ENCODE measurements at regions of chr12 and their contacts with region 1.

Region 1: DNA sequence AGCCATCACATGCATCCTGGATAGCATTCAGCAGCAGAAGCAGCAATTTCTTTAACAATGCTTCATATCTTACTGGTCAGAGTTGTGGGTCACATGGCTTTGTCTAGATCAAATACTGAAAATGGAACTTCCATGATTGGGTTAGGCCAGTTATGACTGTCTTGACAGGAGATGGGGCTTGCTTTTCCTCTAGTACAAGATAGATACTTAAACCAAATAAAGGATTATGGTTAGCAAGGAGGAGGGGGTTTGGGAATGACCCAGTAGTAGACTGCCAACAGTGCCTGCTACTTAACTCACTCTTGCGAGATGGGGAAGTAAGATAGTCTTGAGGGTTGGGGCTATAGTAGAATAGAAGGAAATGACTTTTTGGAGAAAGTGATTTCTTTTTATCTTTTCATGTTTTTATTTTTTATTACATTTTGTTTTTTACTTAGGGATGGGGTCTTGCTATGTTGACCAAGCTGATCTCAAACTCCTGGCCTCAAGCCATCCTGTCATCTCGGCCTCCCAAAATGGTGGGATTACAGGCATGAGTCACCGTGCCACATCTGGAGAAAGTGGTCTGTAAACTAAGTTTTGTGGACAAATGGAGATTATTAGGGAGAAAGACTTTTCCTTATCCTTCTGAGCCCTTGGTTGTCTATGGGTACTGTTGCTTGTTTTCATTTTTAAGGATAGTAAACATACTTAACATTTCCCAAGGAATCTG is 37.6 kb downstream of the WNK1 start:
- DNase-seq: no peak
- H3K4me3 ChIP-seq: no peak overlapping the region
- H3K4me3 Mint-ChIP-seq: peak overlapping the region; percentile 15 to 74 (median 57)
- H3K27ac ChIP-seq: no peak overlapping the region
- H3K27ac Mint-ChIP-seq: peak overlapping the region; percentile 60 to 81 (median 66)
- H3K4me1 ChIP-seq: peaks cover 95% of the 10 kb centered on the region
- H3K4me1 Mint-ChIP-seq: peaks cover 52 to 90% (median 75%) of the 10 kb centered on the region in 4 donors
- H3K27me3 ChIP-seq: no peaks in the 10 kb centered on the region
- H3K27me3 Mint-ChIP-seq: no peaks in the 10 kb centered on the region

Region 2: GRCh38 chr12:802242-803120 is 12.5 kb after region 1 on chr12:
- CTCF ChIA-PET with region 1: interaction called, 4 read pairs
- POLR2A ChIA-PET with region 1: interaction called, 4 read pairs
- intact Hi-C with region 1: loop called (anchors 2 kb)
- DNase-seq: no peak
- H3K4me3 ChIP-seq: no peak overlapping the region
- H3K4me3 Mint-ChIP-seq: peak overlapping the region in 6 of 8 donors; percentile 11 to 66 (median 46)
- H3K27ac ChIP-seq: no peak overlapping the region
- H3K27ac Mint-ChIP-seq: peak overlapping the region; percentile 57 to 86 (median 77)
- H3K4me1 ChIP-seq: peaks cover 76% of the 10 kb centered on the region
- H3K4me1 Mint-ChIP-seq: peaks cover 51 to 79% (median 65%) of the 10 kb centered on the region in 4 donors
- H3K27me3 ChIP-seq: no peaks in the 10 kb centered on the region
- H3K27me3 Mint-ChIP-seq: no peaks in the 10 kb centered on the region

Region 3: DNA sequence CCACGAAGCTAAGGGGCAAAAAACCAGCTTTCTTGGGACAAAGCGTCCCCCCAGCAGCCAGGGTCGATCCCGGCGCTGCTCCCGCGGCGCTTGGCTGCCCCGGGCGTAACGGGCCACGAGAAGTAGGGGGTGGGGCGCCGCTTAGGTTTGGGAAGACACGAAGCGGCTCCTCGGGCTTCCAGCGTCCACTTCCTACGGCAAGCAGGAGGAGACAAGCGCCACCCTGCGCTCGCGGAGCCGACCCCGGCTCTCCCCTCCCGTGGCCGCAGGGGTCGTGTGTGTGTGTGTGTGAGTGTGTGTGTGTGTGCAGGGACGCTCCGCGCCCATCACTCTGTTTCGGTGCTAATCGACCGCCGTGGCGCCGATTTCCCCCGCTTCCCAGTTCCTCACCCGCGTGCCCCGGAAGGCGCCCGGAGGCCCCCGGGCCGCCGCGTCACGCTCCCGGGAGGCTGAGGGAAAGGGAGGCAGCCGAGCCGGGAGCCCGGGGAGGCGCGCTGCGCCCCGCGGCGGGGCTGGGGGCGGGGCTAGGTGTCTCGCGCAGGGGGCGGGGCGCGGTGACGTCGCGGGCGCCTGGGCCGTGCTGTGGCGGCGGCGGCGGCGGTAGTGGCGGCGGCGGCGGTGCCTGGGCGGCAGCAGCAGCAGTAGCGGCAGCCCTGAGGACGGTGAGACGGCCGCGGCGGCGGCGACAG is 200.8 kb after region 1 on chr12 and contains the start of gene ERC1:
- CTCF ChIA-PET with region 1: no interaction called
- POLR2A ChIA-PET with region 1: no interaction called
- intact Hi-C with region 1: no loop called
- DNase-seq: peak; percentile 78 to 90 (median 85)
- H3K4me3 ChIP-seq: peak within 1 kb of the TSS; percentile 69 to 78
- H3K4me3 Mint-ChIP-seq: peak within 1 kb of the TSS; percentile 92 to 100 (median 98)
- H3K27ac ChIP-seq: peak within 1 kb of the TSS; percentile 69
- H3K27ac Mint-ChIP-seq: peak within 1 kb of the TSS; percentile 89 to 99 (median 98)
- H3K4me1 ChIP-seq: peaks cover 31% of the 10 kb centered on the region
- H3K4me1 Mint-ChIP-seq: peaks cover 27 to 45% (median 39%) of the 10 kb centered on the region in 4 donors
- H3K27me3 ChIP-seq: no peaks in the 10 kb centered on the region
- H3K27me3 Mint-ChIP-seq: no peaks in the 10 kb centered on the region
- total RNA-seq, gene ERC1: 34.3 to 41.7 TPM

Measured in CD4-positive, alpha-beta memory T cell (primary cell).